Activated CD8-positive, alpha-beta T cell treated with anti-CD3 and anti-CD28 coated beads, Interleukin-2, amount 10 ng/mL, durations not matched to agents 7 days and 5 days (primary cell): ENCODE measurements at regions of chr2 and their contacts with region 1.

Region 1: GRCh38 chr2:181058378-181059269 is 78.2 kb downstream of the UBE2E3 start:
- DNase-seq: peak; percentile 58
- ATAC-seq: peak; percentile 49
- H3K4me3 Mint-ChIP-seq: no peak overlapping the region
- H3K27ac Mint-ChIP-seq: no peak overlapping the region
- H3K4me1 Mint-ChIP-seq: no peaks in the 10 kb centered on the region
- H3K27me3 Mint-ChIP-seq: no peaks in the 10 kb centered on the region

Region 2: GRCh38 chr2:180125245-180125962 is 933.2 kb before region 1 on chr2:
- CTCF ChIA-PET with region 1: interaction called, 18 read pairs
- POLR2A ChIA-PET with region 1: no interaction called
- DNase-seq: peak; percentile 35
- ATAC-seq: peak; percentile 58
- H3K4me3 Mint-ChIP-seq: no peak overlapping the region
- H3K27ac Mint-ChIP-seq: no peak overlapping the region
- H3K4me1 Mint-ChIP-seq: no peaks in the 10 kb centered on the region
- H3K27me3 Mint-ChIP-seq: peaks cover 20% of the 10 kb centered on the region

Region 3: DNA sequence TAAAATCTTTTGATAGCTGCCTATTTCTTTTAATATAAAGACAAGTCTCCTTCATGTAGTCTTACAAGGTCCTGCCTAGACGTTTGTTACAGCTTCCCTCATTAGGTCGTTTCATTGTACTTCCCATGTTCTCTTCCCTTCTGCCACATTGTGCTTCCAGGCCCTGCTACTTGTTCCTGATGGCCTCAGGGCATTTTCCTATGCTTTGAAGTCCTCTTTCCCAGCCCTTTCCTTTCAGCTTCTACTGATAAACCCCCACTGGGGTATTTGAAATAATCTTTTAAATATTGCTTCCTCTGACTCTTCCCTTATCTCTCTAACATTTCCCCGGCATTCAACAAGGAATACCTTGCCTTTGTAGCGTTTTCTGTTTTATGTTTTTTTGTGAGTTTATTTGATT is 10.8 kb before region 1 on chr2:
- CTCF ChIA-PET with region 1: interaction called, 20 read pairs
- POLR2A ChIA-PET with region 1: no interaction called
- DNase-seq: no peak
- ATAC-seq: no peak
- H3K4me3 Mint-ChIP-seq: no peak overlapping the region
- H3K27ac Mint-ChIP-seq: no peak overlapping the region
- H3K4me1 Mint-ChIP-seq: peaks cover 2% of the 10 kb centered on the region
- H3K27me3 Mint-ChIP-seq: no peaks in the 10 kb centered on the region

Region 4: GRCh38 chr2:181163139-181163538 is 104.5 kb after region 1 on chr2:
- CTCF ChIA-PET with region 1: no interaction called
- POLR2A ChIA-PET with region 1: no interaction called
- DNase-seq: no peak
- ATAC-seq: peak; percentile 56
- H3K4me3 Mint-ChIP-seq: peak overlapping the region; percentile 33
- H3K27ac Mint-ChIP-seq: peak overlapping the region; percentile 52
- H3K4me1 Mint-ChIP-seq: peaks cover 36% of the 10 kb centered on the region
- H3K27me3 Mint-ChIP-seq: no peaks in the 10 kb centered on the region